WTC11 (cell line): ENCODE measurements at regions of chr6 and their contacts with region 1.

Region 1: GRCh38 chr6:3929281-3929798 is 80.2 kb downstream of the FAM50B start:
- DNase-seq: no peak
- ATAC-seq: no peak
- H3K4me3 Mint-ChIP-seq: no peak overlapping the region
- H3K27ac Mint-ChIP-seq: no peak overlapping the region
- H3K4me1 Mint-ChIP-seq: peaks cover 17% of the 10 kb centered on the region
- H3K27me3 Mint-ChIP-seq: no peaks in the 10 kb centered on the region
- CTCF ChIP-seq: no peak

Region 2: GRCh38 chr6:3751730-3752542 is 177.4 kb before region 1 on chr6:
- CTCF ChIA-PET with region 1: interaction called, 40 read pairs
- POLR2A ChIA-PET with region 1: no interaction called
- DNase-seq: peak; percentile 79
- ATAC-seq: peak; percentile 40
- H3K4me3 Mint-ChIP-seq: peak overlapping the region; percentile 62
- H3K27ac Mint-ChIP-seq: no peak overlapping the region
- H3K4me1 Mint-ChIP-seq: peaks cover 56% of the 10 kb centered on the region
- H3K27me3 Mint-ChIP-seq: peaks cover 57% of the 10 kb centered on the region
- CTCF ChIP-seq: no peak; the same call in 1 of the 2 replicates

Region 3: DNA sequence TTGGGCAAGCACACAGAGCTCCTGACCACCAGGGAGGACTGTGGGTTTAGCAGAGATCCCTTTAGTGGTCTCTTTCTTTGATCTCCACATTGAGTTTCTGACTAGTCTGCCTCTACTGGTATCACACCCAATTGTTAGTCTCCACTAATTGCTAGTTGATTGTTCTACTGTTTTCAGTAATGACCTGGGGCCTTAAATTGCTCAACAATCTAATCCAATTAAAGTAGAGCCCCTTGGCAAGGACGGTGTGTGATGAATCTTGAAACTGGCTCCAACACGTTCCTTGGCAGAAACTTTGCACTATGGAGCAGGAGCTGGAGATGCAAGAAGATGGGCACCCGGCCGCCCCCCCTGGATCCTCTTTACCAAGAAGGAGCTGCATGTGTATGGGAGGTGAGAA is 67.9 kb before region 1 on chr6:
- CTCF ChIA-PET with region 1: interaction called, 19 read pairs
- POLR2A ChIA-PET with region 1: no interaction called
- DNase-seq: no peak
- ATAC-seq: no peak
- H3K4me3 Mint-ChIP-seq: no peak overlapping the region
- H3K27ac Mint-ChIP-seq: no peak overlapping the region
- H3K4me1 Mint-ChIP-seq: peaks cover 15% of the 10 kb centered on the region
- H3K27me3 Mint-ChIP-seq: peaks cover 6% of the 10 kb centered on the region; the same call in 1 of the 2 replicates
- CTCF ChIP-seq: no peak

Region 4: DNA sequence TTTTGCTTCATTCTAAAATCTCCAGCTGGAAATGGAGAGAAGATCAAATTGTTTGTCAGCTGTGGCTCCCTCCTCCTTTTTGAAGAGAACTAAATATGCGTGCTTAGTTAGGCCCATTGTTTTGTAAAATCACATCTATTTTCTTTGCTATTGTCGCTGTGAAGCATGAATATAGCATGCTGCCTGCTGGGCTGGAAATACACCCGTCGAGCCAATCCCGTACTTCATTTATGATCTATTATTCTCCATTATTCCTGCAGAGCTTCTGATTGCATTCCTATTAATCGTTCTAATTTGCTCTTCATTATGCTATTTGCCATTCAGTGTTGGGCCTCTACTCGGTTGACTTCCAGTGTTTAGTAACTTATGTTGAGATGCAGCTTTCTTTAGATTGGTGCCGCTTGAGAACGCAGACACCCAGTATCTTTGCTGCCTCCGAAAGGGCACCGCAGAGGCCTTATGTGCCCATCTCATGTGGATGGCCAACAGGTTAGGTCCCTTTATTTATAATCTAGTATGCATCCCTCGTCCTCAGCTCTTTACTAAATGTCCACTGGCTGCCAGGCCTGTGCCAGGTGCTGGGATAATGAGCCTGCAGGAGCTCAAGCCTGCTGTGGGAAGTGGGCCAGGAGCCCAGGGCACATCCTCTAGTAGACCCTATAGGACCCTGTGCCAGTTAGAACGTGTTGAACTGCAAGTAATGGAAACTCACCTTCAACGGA is 34.6 kb before region 1 on chr6:
- CTCF ChIA-PET with region 1: interaction called, 25 read pairs
- POLR2A ChIA-PET with region 1: no interaction called
- DNase-seq: no peak
- ATAC-seq: peak; percentile 59
- H3K4me3 Mint-ChIP-seq: peak overlapping the region; percentile 1
- H3K27ac Mint-ChIP-seq: peak overlapping the region; percentile 43; the same call in 1 of the 2 replicates
- H3K4me1 Mint-ChIP-seq: peaks cover 42% of the 10 kb centered on the region
- H3K27me3 Mint-ChIP-seq: peaks cover 7% of the 10 kb centered on the region
- CTCF ChIP-seq: no peak

Region 5: GRCh38 chr6:3919130-3919628 is 10.2 kb before region 1 on chr6:
- CTCF ChIA-PET with region 1: interaction called, 18 read pairs
- POLR2A ChIA-PET with region 1: no interaction called
- DNase-seq: no peak
- ATAC-seq: no peak
- H3K4me3 Mint-ChIP-seq: no peak overlapping the region
- H3K27ac Mint-ChIP-seq: peak overlapping the region; percentile 23; the same call in 1 of the 2 replicates
- H3K4me1 Mint-ChIP-seq: peaks cover 33% of the 10 kb centered on the region
- H3K27me3 Mint-ChIP-seq: peaks cover 6% of the 10 kb centered on the region
- CTCF ChIP-seq: no peak

Region 6: GRCh38 chr6:3977875-3978711 is 48.8 kb after region 1 on chr6:
- CTCF ChIA-PET with region 1: interaction called, 38 read pairs
- POLR2A ChIA-PET with region 1: no interaction called
- DNase-seq: peak; percentile 33
- ATAC-seq: peak; percentile 99
- H3K4me3 Mint-ChIP-seq: no peak overlapping the region
- H3K27ac Mint-ChIP-seq: no peak overlapping the region
- H3K4me1 Mint-ChIP-seq: peaks cover 17% of the 10 kb centered on the region
- H3K27me3 Mint-ChIP-seq: no peaks in the 10 kb centered on the region
- CTCF ChIP-seq: peak; percentile 38